ENCODE measurements at regions of chr6 and their contacts with region 1.

Region 1: DNA sequence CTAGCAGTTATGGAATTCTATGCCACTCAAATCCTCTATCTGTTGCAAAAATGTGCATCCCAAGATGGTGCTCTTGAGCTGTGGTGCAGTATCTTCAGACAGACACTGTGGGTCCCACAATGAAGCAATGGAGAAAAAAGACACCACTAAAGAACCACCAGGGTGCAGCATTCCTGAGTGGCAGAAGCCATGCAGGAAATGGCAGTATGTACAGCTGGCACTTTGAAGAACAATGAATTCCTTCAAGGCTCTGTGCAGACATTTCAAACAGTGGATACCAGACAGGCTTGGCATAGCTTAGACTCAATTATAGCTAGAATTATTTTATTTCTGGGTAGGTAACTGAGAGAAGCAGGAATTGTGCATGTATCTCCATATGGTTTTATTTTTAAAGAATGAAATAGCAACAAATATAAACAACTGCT is 24.0 kb upstream of the HDAC2 start:
- DNase-seq: peak; percentile 88
- H3K4me3 Mint-ChIP-seq: no peak overlapping the region
- H3K27ac Mint-ChIP-seq: no peak overlapping the region
- H3K4me1 Mint-ChIP-seq: peaks cover 31% of the 10 kb centered on the region
- H3K27me3 Mint-ChIP-seq: no peaks in the 10 kb centered on the region
- CTCF ChIP-seq: peak; percentile 94

Region 2: DNA sequence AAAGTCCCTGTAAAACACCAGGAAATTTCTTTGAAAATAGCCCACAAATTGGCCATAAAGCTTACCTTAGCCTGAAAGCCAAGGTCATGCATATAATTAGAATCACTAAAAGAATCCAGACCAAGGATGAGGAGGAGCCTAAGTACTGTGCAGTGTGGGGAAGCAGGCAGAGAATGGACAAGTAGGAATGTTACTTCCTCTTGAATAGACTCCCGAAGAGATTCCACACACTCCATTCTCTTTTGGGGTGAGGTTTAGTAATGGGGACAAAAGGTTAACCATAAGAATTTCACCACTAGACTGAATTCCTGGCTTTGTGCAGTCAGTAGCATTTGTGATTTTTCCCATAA is 165.3 kb before region 1 on chr6:
- CTCF ChIA-PET with region 1: no interaction called
- POLR2A ChIA-PET with region 1: no interaction called
- intact Hi-C with region 1: no loop called
- DNase-seq: no peak
- H3K4me3 Mint-ChIP-seq: no peak overlapping the region
- H3K27ac Mint-ChIP-seq: no peak overlapping the region
- H3K4me1 Mint-ChIP-seq: no peaks in the 10 kb centered on the region
- H3K27me3 Mint-ChIP-seq: no peaks in the 10 kb centered on the region
- CTCF ChIP-seq: no peak

Region 3: DNA sequence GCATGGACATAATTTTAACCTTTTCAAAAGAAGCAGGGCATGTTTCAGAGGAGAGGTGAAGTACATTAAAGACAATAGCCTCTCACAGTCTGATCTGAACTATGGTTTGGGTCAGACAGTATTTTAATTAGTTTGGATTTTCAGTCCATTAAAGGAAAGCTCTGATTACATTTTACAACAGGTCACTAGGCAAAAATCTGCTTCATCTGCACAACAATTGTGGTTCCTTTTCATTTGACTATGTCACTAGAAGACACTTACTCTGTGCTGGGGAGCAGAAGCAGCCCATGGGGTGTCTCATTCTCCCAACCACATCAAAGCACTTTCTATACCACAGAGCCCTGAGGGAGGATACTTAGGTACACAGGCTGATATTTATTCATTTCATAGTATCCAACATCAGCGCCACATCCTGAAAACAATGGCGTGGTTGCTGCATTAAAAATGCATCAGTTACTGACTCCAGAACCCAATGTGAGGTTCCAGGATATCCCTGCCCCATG is 12.6 kb after region 1 on chr6:
- CTCF ChIA-PET with region 1: interaction called, 24 read pairs
- POLR2A ChIA-PET with region 1: no interaction called
- intact Hi-C with region 1: no loop called
- DNase-seq: no peak
- H3K4me3 Mint-ChIP-seq: no peak overlapping the region
- H3K27ac Mint-ChIP-seq: no peak overlapping the region
- H3K4me1 Mint-ChIP-seq: peaks cover 12% of the 10 kb centered on the region
- H3K27me3 Mint-ChIP-seq: no peaks in the 10 kb centered on the region
- CTCF ChIP-seq: no peak

Region 4: DNA sequence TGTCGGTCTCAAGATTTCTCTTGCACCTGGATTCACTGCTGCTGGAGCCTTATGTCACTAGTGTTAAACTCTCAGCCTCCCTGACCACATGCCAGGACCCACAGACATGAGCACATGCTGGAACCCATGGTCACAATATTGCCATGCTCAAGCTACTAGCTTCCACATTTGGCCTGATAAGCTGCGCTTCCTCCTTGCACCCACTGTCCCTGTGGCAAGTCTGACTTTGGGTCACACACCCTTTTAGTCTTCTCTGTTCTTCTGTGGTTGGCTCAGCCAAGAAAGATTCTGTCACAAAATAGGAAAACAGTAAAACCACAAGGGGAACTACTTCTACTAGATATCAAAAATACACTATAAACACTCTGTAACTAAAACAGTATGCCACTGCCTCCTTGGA is 44.9 kb after region 1 on chr6:
- CTCF ChIA-PET with region 1: interaction called, 10 read pairs
- POLR2A ChIA-PET with region 1: no interaction called
- intact Hi-C with region 1: no loop called
- DNase-seq: no peak
- H3K4me3 Mint-ChIP-seq: no peak overlapping the region
- H3K27ac Mint-ChIP-seq: no peak overlapping the region
- H3K4me1 Mint-ChIP-seq: no peaks in the 10 kb centered on the region
- H3K27me3 Mint-ChIP-seq: no peaks in the 10 kb centered on the region
- CTCF ChIP-seq: no peak

Region 5: DNA sequence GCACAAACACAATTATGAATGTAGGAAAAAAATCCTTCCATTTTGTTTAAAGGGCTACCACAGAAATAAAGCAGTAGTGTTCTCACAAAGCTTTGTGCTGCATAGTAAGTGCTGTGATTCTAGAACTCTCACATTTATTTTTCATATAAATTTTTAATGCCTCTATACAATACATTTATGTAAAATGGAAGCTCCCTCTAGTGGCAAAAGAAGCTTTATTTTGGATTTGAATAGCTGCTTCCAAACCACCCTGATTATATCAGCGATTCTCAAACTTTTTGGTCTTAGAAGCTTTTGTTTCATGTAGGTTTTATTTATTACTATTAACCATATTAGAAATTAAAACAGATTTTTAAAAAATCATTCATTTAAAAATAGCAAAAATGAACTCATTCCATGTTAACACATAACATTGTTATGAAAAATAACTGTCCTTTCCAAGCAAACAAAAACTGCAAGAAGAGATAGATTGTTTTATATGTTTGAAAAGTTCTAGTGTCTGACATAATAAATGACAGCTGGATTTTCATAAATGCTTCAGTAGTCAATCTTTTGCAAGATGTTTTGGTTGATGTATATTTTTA is 309.5 kb after region 1 on chr6:
- CTCF ChIA-PET with region 1: interaction called, 42 read pairs
- POLR2A ChIA-PET with region 1: no interaction called
- intact Hi-C with region 1: loop called (anchors 1 kb)
- DNase-seq: peak; percentile 27
- H3K4me3 Mint-ChIP-seq: no peak overlapping the region
- H3K27ac Mint-ChIP-seq: no peak overlapping the region
- H3K4me1 Mint-ChIP-seq: no peaks in the 10 kb centered on the region
- H3K27me3 Mint-ChIP-seq: peaks cover 51% of the 10 kb centered on the region
- CTCF ChIP-seq: peak; percentile 25

Region 6: DNA sequence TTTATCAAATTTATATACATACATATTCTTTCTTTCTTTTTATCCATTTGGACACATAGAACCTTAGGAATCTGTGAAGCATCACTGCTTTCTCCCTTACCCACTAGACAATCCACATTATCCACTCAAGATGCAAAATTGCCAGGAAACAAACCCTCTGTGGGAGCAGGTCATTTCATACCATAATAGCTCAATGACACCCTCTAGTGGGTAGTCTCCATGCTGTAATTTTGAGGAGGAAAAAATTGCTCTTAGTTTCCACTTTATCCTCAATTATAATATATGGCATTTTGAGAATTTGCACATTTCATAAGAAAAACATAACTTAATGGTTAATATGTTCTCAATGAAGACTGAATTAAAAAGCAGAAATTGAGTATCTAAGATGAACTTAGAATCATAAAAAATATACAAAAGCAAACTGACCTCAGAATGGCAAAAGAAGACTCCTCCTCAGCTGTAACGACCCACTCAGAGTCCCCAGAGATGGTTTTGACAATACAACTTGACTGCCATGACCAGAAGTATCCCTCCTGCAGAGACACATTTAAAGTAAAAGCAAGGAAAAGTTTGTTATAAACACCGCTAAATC is 1901.7 kb after region 1 on chr6:
- CTCF ChIA-PET with region 1: no interaction called
- POLR2A ChIA-PET with region 1: no interaction called
- intact Hi-C with region 1: loop called (anchors 5 kb)
- DNase-seq: peak; percentile 54
- H3K4me3 Mint-ChIP-seq: no peak overlapping the region
- H3K27ac Mint-ChIP-seq: no peak overlapping the region
- H3K4me1 Mint-ChIP-seq: no peaks in the 10 kb centered on the region
- H3K27me3 Mint-ChIP-seq: peaks cover 56% of the 10 kb centered on the region
- CTCF ChIP-seq: peak; percentile 80